Common myeloid progenitor, CD34-positive (primary cell): ENCODE measurements at regions of chr2 and their contacts with region 1.

Region 1: DNA sequence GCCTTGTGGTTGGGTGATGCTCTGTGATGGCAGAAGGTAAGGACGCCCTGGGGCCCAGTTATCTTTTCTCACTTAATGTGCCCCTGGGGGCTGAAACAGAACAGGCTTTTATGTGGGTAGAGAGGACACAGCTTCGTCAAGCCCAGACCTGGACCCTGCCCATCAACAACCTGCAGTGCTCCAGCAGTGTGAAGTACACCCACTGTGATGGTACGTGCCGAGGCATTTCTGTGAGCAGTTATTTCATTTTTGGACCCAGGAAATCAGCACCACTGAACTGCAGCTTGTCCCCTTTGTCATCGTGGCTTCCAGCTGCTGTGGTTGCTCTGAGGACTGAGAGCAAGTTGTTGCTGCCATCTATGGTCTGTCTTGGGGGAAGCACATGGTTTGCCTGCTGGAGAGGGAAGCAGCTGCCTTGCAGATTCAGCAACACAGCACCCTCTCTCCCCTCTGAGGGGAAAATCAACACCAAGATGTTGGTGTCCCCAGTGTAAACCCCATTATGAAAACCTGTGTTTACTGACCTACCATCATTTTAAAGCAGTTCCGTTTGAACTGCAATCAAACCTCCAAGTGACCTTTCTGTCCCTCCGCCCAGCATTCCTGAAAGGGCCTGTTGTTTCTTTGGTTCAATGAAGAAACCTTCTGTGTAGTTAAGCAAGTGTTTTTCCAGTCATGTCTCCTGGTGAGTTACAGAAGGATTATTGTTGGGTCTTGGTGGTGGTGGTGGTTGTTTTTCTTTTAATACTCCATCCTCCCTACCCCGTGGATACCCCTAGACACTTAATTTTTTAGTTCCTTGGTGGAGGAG is 158.2 kb downstream of the MGAT5 start:
- DNase-seq: peak; percentile 78 to 91 (median 90)
- H3K4me3 ChIP-seq: no peak overlapping the region
- H3K27ac ChIP-seq: no peak overlapping the region
- H3K4me1 ChIP-seq: peaks cover 6 to 14% (median 8%) of the 10 kb centered on the region in 4 experiments
- H3K27me3 ChIP-seq: no peaks in the 10 kb centered on the region

Region 2: DNA sequence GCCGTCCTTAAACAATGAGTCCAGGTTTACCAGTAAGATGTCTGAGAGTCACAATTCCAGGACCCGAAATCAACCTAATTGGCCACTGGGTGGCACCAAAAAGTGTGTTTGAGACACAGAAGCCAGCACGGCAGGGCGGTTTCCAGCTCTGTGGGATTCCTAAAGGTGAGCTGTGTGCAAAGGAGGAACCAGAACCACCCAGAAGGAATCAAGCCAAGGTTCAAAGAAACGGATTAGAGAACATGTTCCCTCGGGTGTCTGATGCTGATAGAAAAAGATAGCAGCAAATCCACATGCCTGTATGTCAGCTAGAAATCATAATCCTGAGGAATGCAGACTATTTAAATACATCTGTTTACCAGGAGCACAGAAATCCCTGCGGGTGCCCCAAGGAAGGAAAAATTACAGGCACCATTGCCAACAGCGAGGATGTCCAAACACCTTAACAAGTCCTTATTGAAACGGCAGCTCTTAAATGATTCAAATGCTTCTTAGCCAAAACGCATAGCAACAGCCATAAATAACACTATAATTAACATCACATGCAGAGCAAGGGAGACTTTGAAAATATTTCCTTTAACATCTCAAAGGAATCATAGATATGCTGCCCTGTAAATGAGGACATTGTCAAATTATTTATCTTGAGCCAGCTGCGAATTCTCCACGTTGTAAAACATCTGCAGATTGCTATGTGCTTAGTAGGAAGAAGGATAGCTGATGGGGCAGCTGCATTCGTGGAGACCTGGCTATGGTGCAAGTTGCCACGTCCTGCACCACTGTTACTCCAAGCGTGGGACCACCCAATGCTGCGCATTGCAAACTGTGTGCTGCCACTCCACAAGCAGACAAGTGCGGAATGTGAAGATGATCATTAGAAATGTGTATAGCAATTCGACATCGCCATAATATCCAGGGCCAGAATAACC is 525.0 kb before region 1 on chr2:
- CTCF ChIA-PET with region 1: interaction called, 88 read pairs
- POLR2A ChIA-PET with region 1: no interaction called
- DNase-seq: peak; percentile 49 to 67 (median 63)
- H3K4me3 ChIP-seq: no peak overlapping the region
- H3K27ac ChIP-seq: no peak overlapping the region
- H3K4me1 ChIP-seq: no peaks in the 10 kb centered on the region
- H3K27me3 ChIP-seq: peaks cover 0 to 6% (median 2%) of the 10 kb centered on the region in 5 experiments

Region 3: GRCh38 chr2:134401081-134401497 is 10.9 kb before region 1 on chr2:
- CTCF ChIA-PET with region 1: interaction called, 36 read pairs
- POLR2A ChIA-PET with region 1: no interaction called
- DNase-seq: no peak
- H3K4me3 ChIP-seq: no peak overlapping the region
- H3K27ac ChIP-seq: no peak overlapping the region
- H3K4me1 ChIP-seq: peaks cover 0 to 5% (median 0%) of the 10 kb centered on the region in 4 experiments
- H3K27me3 ChIP-seq: no peaks in the 10 kb centered on the region